ENCODE measurements at regions of chr3 and their contacts with region 1.

Region 1: GRCh38 chr3:112293368-112294321 is at the start of gene SLC9C1:
- DNase-seq: peak in 8 of 14 experiments; percentile 8 to 76 (median 37)
- ATAC-seq: peak; percentile 82
- H3K4me3 ChIP-seq: peak within 1 kb of the TSS; percentile 27
- H3K4me3 Mint-ChIP-seq: peak within 1 kb of the TSS; percentile 87
- H3K27ac ChIP-seq: no peak within 1 kb of the TSS
- H3K27ac Mint-ChIP-seq: peak within 1 kb of the TSS; percentile 59
- H3K4me1 ChIP-seq: peaks cover 4% of the 10 kb centered on the region
- H3K4me1 Mint-ChIP-seq: peaks cover 25% of the 10 kb centered on the region
- H3K27me3 ChIP-seq: no peaks in the 10 kb centered on the region
- H3K27me3 Mint-ChIP-seq: no peaks in the 10 kb centered on the region
- CTCF ChIP-seq: peak; percentile 73
- total RNA-seq, gene SLC9C1: not detected

Region 2: DNA sequence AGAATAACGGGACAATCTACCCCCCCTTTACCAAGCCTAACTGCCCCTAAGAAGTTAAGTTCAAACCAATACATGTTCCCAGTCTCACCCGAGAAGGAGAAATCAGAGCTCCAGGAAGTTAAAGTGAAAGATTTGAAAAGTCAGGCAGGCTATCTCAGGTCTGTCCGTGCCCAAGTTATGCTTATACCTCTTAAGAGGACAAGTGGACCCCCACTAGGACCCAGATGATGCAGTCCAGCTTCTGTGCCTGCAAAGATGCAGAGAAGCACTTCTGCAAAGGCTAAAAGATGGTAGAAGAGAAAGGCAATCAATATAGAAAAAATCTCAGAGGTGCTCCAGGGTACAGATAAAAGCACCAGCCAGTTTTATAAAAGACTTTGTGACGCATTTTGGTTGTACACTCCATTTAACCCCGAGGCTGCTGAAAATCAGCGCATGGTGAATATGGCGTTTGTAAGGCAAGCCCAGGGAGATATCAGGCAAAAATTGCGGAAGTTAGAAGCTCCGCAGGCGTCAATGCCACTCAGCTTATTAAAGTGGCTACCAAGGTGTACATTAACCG is 10.2 kb after region 1 on chr3:
- CTCF ChIA-PET with region 1: interaction called, 10 read pairs
- POLR2A ChIA-PET with region 1: interaction called, 14 read pairs
- intact Hi-C with region 1: no loop called
- DNase-seq: peak in 8 of 14 experiments; percentile 8 to 52 (median 23)
- ATAC-seq: peak; percentile 83
- H3K4me3 ChIP-seq: peak overlapping the region; percentile 60
- H3K4me3 Mint-ChIP-seq: no peak overlapping the region
- H3K27ac ChIP-seq: no peak overlapping the region
- H3K27ac Mint-ChIP-seq: no peak overlapping the region
- H3K4me1 ChIP-seq: peaks cover 22% of the 10 kb centered on the region
- H3K4me1 Mint-ChIP-seq: peaks cover 1% of the 10 kb centered on the region
- H3K27me3 ChIP-seq: no peaks in the 10 kb centered on the region
- H3K27me3 Mint-ChIP-seq: no peaks in the 10 kb centered on the region
- CTCF ChIP-seq: no peak

Region 3: DNA sequence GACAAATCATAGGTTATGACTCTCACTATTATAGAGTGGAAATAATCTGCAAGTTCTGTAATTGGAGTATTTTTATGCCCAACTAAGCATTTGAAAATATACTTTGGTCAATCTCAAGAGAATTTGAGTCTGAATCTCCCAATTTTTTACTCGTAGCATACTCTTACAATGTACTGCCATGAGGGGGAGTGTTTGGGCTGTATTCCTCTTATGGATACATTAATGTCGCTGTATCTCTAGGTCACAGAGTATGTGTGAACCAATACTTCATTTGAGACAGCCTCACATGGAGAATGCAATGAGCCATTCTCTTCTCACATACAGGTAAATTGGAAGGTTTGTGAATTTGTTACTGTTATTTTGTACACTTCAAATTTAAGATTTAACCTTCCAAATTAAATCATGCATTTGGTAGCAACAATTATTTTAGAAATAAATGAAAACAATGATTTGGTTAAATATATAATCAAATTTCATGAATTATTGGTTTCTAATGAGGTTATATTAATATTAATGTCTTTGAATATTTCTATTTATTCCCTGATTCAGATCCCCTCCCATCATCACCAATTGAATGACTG is 33.8 kb after region 1 on chr3:
- CTCF ChIA-PET with region 1: no interaction called
- POLR2A ChIA-PET with region 1: no interaction called
- intact Hi-C with region 1: loop called in 1 of 2 experiments (anchors 2 kb)
- DNase-seq: peak in 8 of 14 experiments; percentile 17 to 81 (median 43)
- ATAC-seq: peak; percentile 100
- H3K4me3 ChIP-seq: no peak overlapping the region
- H3K4me3 Mint-ChIP-seq: no peak overlapping the region
- H3K27ac ChIP-seq: no peak overlapping the region
- H3K27ac Mint-ChIP-seq: no peak overlapping the region
- H3K4me1 ChIP-seq: peaks cover 2% of the 10 kb centered on the region
- H3K4me1 Mint-ChIP-seq: peaks cover 5% of the 10 kb centered on the region
- H3K27me3 ChIP-seq: no peaks in the 10 kb centered on the region
- H3K27me3 Mint-ChIP-seq: peaks cover 8% of the 10 kb centered on the region
- CTCF ChIP-seq: peak; percentile 77

Region 4: DNA sequence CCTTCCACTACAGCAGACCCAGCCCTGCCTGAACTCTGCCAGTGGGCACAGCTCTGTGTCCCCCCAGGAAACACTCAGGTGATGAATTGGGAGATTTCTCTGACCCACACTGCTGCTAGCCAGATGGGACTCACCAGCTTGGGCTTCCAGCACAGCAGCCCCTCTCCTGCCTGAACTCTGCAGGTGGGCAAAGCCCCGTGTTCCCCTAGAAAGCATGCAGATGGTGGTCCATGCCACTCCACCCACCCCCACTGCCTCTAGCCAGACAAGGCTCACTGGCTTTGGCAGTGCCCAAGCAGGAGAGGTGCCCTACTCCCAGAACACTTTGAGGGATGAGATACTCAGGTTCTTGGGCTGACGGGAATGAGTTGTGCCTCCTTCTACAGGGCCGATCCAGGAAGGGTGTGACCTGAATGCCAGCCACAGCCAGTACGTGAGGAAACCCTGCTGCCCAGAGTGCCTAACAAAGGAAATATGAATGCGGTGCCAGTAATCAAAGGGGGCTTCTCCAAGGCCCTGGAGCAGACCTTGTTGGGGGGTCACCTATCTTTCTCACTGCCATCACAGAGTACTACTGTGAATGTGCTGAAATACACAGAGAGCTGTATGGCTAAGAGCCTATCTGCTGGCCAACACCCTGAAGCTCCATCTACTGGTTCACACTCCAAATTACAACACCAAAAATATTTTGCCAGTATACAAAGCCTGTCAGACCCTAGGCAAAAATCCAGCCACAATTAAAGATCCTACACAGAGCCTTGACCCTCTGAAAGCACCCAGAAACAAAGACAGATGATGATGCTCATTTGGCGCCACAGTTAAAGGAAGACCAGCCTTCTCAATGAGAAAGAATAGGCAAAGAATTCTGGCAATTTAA is 143.7 kb after region 1 on chr3:
- CTCF ChIA-PET with region 1: no interaction called
- POLR2A ChIA-PET with region 1: no interaction called
- intact Hi-C with region 1: no loop called
- DNase-seq: peak in 3 of 14 experiments; percentile 49 to 56 (median 55)
- ATAC-seq: peak; percentile 72
- H3K4me3 ChIP-seq: no peak overlapping the region
- H3K4me3 Mint-ChIP-seq: peak overlapping the region; percentile 50
- H3K27ac ChIP-seq: no peak overlapping the region
- H3K27ac Mint-ChIP-seq: no peak overlapping the region
- H3K4me1 ChIP-seq: peaks cover 10% of the 10 kb centered on the region
- H3K4me1 Mint-ChIP-seq: peaks cover 17% of the 10 kb centered on the region
- H3K27me3 ChIP-seq: no peaks in the 10 kb centered on the region
- H3K27me3 Mint-ChIP-seq: no peaks in the 10 kb centered on the region
- CTCF ChIP-seq: peak; percentile 42

Region 5: DNA sequence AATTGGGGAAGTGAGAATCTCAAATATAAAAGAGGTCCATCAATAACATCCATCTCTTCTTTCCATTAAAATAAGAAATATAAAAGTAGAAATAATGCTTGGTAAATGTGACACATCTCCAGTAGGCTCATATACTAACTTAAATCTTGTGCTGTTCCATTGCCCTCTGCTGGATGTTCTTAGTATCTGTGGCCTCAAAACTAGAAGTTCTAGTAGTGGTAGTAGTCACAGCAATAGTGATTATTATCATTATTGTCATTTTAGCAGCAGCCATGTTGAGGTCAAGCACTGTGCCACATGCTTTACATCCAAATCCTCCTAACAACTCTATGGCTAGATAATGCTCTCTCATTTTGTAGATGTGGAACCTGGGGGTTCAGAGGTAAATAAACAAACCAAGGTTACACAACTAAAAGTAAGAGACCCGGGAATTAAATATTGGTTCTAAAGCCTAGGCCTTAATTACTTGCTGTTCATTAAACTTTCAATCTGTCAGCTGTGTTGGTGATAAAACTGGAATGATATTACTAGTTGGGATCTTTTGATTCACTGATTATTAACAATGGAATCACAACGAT is 225.9 kb after region 1 on chr3:
- CTCF ChIA-PET with region 1: interaction called, 8 read pairs
- POLR2A ChIA-PET with region 1: interaction called, 3 read pairs
- intact Hi-C with region 1: loop called (anchors 1 kb)
- DNase-seq: peak in 5 of 14 experiments; percentile 26 to 81 (median 75)
- ATAC-seq: peak; percentile 97
- H3K4me3 ChIP-seq: no peak overlapping the region
- H3K4me3 Mint-ChIP-seq: no peak overlapping the region
- H3K27ac ChIP-seq: no peak overlapping the region
- H3K27ac Mint-ChIP-seq: no peak overlapping the region
- H3K4me1 ChIP-seq: no peaks in the 10 kb centered on the region
- H3K4me1 Mint-ChIP-seq: peaks cover 20% of the 10 kb centered on the region
- H3K27me3 ChIP-seq: no peaks in the 10 kb centered on the region
- H3K27me3 Mint-ChIP-seq: no peaks in the 10 kb centered on the region
- CTCF ChIP-seq: peak; percentile 74

Region 6: DNA sequence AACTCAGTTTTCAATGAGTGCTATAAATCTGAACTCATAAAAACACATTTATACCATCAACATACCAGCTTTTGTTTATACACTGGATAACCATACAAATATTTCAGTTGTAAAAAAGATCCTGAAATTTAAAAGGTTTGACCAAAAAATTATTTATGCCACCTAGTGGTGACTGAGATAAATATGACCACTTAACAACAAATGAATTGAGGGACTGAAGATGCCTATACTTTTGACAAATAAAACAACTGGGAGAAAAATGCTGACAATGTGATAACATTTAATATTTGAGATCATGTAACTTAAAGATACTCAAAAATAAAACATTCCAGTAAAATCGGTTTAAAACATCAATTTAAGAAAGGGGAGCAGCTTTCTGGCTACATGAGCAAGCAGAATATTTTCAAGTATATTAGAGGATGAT is 237.7 kb after region 1 on chr3:
- CTCF ChIA-PET with region 1: interaction called, 5 read pairs
- POLR2A ChIA-PET with region 1: interaction called, 5 read pairs
- intact Hi-C with region 1: loop called in 1 of 2 experiments (anchors 2 kb)
- DNase-seq: peak in 3 of 14 experiments; percentile 47 to 60 (median 55)
- ATAC-seq: no peak
- H3K4me3 ChIP-seq: no peak overlapping the region
- H3K4me3 Mint-ChIP-seq: no peak overlapping the region
- H3K27ac ChIP-seq: no peak overlapping the region
- H3K27ac Mint-ChIP-seq: peak overlapping the region; percentile 6
- H3K4me1 ChIP-seq: no peaks in the 10 kb centered on the region
- H3K4me1 Mint-ChIP-seq: no peaks in the 10 kb centered on the region
- H3K27me3 ChIP-seq: no peaks in the 10 kb centered on the region
- H3K27me3 Mint-ChIP-seq: no peaks in the 10 kb centered on the region
- CTCF ChIP-seq: peak; percentile 80

Measured in CD4-positive, alpha-beta T cell (primary cell).